Gastrocnemius medialis (tissue), 4 donors: ENCODE measurements at regions of chr11 and their contacts with region 1.

Region 1: GRCh38 chr11:6353367-6353987 is 33.2 kb upstream of the CAVIN3 start:
- DNase-seq: peak; percentile 18 to 39
- ATAC-seq: peak; percentile 21 to 68
- H3K4me3 ChIP-seq: no peak overlapping the region
- H3K27ac ChIP-seq: no peak overlapping the region
- H3K4me1 ChIP-seq: peaks cover 0 to 3% of the 10 kb centered on the region in 2 donors
- H3K27me3 ChIP-seq: no peaks in the 10 kb centered on the region
- CTCF ChIP-seq: peak; percentile 79 to 96 (median 94)
- POLR2A ChIP-seq: no peak

Region 2: DNA sequence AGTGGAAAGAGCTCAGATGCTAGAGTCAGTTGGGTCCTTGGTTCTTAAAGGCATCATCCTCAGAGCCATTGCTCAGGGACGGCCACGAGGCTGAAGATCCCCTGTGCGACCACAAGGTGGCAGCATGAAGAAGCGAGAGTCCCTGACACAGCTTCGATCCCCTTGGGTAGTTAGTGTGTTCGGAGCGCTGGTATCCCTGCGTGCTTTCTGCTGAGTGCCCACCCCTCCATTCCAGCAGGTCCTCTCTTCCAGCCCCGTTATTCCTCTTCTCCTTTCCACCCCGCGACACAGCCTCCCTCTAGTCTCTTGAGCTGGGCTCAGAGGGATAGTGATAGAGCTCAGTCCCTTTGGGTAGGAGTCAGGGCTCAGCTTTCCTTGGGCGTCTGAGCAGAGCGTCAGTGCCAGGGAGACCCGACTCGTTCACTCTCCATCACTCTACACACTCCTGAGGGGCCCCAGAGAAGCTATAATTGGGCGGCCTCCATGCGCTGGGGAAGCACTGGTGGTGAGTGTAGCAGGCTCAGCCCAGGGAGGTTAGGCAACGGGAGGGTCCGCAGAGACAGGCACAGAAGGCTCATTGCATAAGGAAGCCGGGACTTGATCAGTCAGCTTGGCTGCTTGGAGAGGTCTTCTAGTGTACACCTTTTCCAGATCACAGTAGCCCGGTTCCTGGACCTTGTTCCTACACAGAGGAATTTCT is 1716.4 kb before region 1 on chr11 and contains the start of gene OR51D1:
- in situ Hi-C with region 1: no loop called
- intact Hi-C with region 1: loop called (anchors 2 kb)
- DNase-seq: peak in 1 of 2 donors; percentile 45
- ATAC-seq: peak; percentile 72 to 88
- H3K4me3 ChIP-seq: peak within 1 kb of the TSS; percentile 27 to 49 (median 32)
- H3K27ac ChIP-seq: no peak within 1 kb of the TSS
- H3K4me1 ChIP-seq: no peaks in the 10 kb centered on the region
- H3K27me3 ChIP-seq: no peaks in the 10 kb centered on the region
- CTCF ChIP-seq: peak; percentile 42 to 88 (median 77)
- POLR2A ChIP-seq: no peak
- total RNA-seq, gene OR51D1: not detected

Region 3: GRCh38 chr11:5476184-5476819 is 877.2 kb before region 1 on chr11:
- in situ Hi-C with region 1: no loop called
- intact Hi-C with region 1: loop called (anchors 5 kb)
- DNase-seq: no peak
- ATAC-seq: no peak
- H3K4me3 ChIP-seq: no peak overlapping the region
- H3K27ac ChIP-seq: no peak overlapping the region
- H3K4me1 ChIP-seq: no peaks in the 10 kb centered on the region
- H3K27me3 ChIP-seq: no peaks in the 10 kb centered on the region
- CTCF ChIP-seq: peak in 4 of 5 experiments; percentile 24 to 66 (median 42)
- POLR2A ChIP-seq: no peak

Region 4: DNA sequence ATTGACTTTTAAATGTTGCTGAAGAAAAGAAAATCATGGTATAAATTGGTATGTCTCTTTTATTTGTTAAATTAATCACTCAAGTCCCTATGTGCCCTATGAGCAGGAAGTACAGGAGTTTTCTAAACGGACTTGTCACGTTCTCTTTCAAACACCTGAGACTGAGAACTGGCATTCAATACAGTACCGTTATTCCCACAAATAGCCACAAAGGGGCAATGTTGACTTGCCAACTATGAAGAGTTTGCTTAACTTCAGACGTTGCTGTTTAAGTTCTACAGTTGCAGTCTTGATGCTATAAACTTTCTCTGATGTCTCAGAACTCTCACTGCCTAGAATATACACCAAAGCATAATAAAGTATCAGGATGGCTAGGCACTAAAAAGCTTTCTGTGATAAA is 330.5 kb before region 1 on chr11:
- in situ Hi-C with region 1: loop called in 3 of 4 experiments (anchors 10 to 25 kb)
- intact Hi-C with region 1: no loop called
- DNase-seq: no peak
- ATAC-seq: no peak
- H3K4me3 ChIP-seq: no peak overlapping the region
- H3K27ac ChIP-seq: no peak overlapping the region
- H3K4me1 ChIP-seq: no peaks in the 10 kb centered on the region
- H3K27me3 ChIP-seq: no peaks in the 10 kb centered on the region
- CTCF ChIP-seq: peak in 3 of 5 experiments; percentile 17 to 43 (median 39)
- POLR2A ChIP-seq: no peak

Region 5: GRCh38 chr11:6298605-6299004 is 54.9 kb before region 1 on chr11:
- in situ Hi-C with region 1: loop called in 1 of 4 experiments (anchors 10 kb)
- intact Hi-C with region 1: no loop called
- DNase-seq: peak in 1 of 2 donors; percentile 14
- ATAC-seq: peak in 1 of 2 donors; percentile 70
- H3K4me3 ChIP-seq: no peak overlapping the region
- H3K27ac ChIP-seq: no peak overlapping the region
- H3K4me1 ChIP-seq: no peaks in the 10 kb centered on the region
- H3K27me3 ChIP-seq: no peaks in the 10 kb centered on the region
- CTCF ChIP-seq: peak in 4 of 5 experiments; percentile 16 to 61 (median 49)
- POLR2A ChIP-seq: no peak

Region 6: DNA sequence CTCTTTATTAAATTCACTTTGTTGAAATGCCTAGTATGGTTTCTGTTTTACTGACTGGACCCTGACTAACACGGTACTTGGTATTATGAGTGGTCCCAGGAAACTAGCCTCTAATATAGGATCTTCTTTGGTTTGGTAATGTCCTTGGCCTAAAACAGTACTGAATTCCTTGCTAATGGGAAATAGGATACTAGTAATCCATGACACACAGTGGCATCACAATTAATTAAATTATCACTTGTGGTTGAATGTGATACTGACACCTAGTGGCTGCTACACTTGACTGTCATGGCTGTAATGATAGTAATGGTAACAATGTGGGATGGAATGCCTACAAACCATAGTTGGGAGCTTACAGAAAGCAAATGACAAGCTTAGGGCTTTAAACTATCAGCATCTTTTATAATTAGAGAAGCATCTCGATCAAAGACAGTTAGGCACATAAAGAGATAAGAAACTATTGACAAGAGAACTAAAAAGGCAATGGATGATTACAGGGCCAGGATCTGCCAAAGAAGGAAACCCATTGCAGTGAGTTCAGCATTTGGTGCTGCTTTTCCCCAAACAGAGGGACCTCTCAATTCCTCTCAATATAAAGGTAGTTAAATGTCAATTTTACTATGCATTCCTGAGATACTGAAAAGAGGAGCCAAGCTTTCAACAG is 152.2 kb after region 1 on chr11:
- in situ Hi-C with region 1: no loop called
- intact Hi-C with region 1: no loop called
- DNase-seq: no peak
- ATAC-seq: peak in 1 of 2 donors; percentile 36
- H3K4me3 ChIP-seq: no peak overlapping the region
- H3K27ac ChIP-seq: no peak overlapping the region
- H3K4me1 ChIP-seq: no peaks in the 10 kb centered on the region
- H3K27me3 ChIP-seq: no peaks in the 10 kb centered on the region
- CTCF ChIP-seq: peak; percentile 43 to 72 (median 53)
- POLR2A ChIP-seq: no peak